ENCODE measurements at regions of chr6 and their contacts with region 1.

Region 1: DNA sequence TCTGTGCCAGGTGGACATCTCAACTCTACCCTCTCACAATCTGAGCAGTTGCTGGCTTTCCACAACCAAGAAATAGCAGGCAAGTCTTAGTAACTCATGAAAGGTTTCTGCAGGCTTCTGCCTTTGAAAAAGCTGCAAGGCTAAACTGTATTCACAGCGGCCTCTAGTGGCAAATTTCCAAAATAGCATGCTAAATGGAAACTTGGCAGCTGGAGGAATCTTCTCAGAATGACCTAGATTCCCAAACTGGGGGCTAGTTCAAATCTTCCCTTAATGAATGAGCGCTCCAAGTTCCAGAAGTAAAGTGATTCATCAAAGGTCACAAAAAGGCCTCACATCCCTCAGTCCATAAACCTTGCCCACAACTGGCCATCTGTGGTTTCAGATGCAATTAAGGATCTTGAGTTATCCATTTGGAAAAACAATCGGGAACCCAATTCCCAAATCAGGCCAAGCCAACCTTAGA is 11.9 kb upstream of the CPNE5 start:
- DNase-seq: peak; percentile 56
- ATAC-seq: peak; percentile 23
- H3K4me3 Mint-ChIP-seq: no peak overlapping the region
- H3K27ac Mint-ChIP-seq: no peak overlapping the region
- H3K4me1 Mint-ChIP-seq: peaks cover 2% of the 10 kb centered on the region
- H3K27me3 Mint-ChIP-seq: no peaks in the 10 kb centered on the region

Region 2: DNA sequence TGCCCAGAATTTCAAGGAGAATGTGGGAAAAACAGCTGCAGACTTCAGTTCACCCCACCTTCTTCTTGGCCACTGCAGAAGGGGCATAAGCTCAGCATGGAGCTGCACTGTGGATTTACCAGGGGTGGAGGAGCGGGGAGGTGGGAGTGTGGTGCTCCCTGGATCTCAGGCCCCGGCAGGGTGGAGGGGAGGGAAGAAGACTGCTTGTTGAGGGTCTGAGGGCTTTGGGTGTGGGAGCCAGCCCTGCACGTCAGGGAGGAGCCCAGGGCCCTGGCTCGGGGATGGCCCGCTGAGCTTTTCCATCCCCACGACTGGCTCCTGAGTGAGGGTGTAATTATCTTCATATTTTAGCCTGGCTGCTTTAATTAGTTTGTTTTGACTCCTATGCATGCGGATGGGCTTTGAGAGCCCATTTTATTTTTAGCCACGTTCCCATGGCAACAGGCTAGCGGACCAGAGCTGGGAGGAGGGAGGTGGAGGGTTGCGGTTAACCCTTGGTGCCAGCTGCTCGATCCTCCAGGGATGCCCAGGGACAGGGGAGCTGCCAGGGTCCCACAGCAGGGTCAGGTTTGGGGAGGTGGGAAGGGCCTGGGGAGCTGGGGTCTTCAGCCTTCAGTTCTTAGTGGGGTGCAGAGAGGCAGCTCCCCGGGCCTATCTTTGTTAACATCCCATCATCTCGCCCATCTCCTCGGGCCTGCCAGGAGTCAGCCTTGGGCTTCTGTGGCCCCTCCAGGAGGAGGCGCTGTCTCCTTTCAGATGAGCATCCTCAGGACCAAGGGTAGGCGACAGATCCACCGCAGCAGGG is 85.4 kb before region 1 on chr6:
- CTCF ChIA-PET with region 1: interaction called, 60 read pairs
- POLR2A ChIA-PET with region 1: interaction called, 3 read pairs
- intact Hi-C with region 1: loop called (anchors 1 to 2 kb)
- DNase-seq: peak; percentile 92
- ATAC-seq: peak; percentile 92
- H3K4me3 Mint-ChIP-seq: no peak overlapping the region
- H3K27ac Mint-ChIP-seq: no peak overlapping the region
- H3K4me1 Mint-ChIP-seq: peaks cover 26% of the 10 kb centered on the region
- H3K27me3 Mint-ChIP-seq: no peaks in the 10 kb centered on the region

Region 3: GRCh38 chr6:36780442-36781177 is 70.6 kb before region 1 on chr6:
- CTCF ChIA-PET with region 1: interaction called, 17 read pairs
- POLR2A ChIA-PET with region 1: no interaction called
- intact Hi-C with region 1: no loop called
- DNase-seq: no peak
- ATAC-seq: no peak
- H3K4me3 Mint-ChIP-seq: no peak overlapping the region
- H3K27ac Mint-ChIP-seq: no peak overlapping the region
- H3K4me1 Mint-ChIP-seq: no peaks in the 10 kb centered on the region
- H3K27me3 Mint-ChIP-seq: no peaks in the 10 kb centered on the region

Region 4: GRCh38 chr6:36786055-36786675 is 65.0 kb before region 1 on chr6:
- CTCF ChIA-PET with region 1: interaction called, 17 read pairs
- POLR2A ChIA-PET with region 1: no interaction called
- intact Hi-C with region 1: no loop called
- DNase-seq: no peak
- ATAC-seq: no peak
- H3K4me3 Mint-ChIP-seq: no peak overlapping the region
- H3K27ac Mint-ChIP-seq: no peak overlapping the region
- H3K4me1 Mint-ChIP-seq: peaks cover 6% of the 10 kb centered on the region
- H3K27me3 Mint-ChIP-seq: peaks cover 2% of the 10 kb centered on the region

Region 5: DNA sequence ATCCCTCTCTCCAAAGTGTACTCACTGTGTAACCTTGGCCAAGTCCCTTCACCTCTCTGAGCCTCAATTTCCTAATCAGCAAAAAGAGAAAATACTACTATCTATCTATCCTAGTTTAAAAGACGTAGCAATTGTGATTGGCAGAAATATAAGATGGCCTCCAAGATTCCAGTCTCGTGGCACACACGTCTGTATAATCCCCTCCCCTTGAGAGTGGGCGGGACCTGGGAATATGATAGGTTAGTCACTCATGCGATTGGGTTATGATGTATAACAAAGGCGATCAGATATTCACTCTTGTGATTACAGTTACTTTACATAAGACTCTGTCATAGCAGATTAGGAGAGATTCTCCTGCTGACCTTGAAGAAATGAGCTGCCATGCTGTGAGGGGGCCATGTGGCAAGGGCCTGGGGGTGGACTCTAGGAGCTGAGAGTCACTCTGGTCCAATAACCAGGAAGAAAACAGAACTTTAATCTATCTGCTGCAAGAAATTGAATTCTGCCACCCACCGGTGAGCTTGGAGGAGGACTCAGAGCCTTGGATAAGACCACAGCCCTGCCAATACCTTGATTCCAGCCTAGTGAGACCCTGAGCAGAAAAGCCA is 17.9 kb before region 1 on chr6:
- CTCF ChIA-PET with region 1: interaction called, 11 read pairs
- POLR2A ChIA-PET with region 1: interaction called, 3 read pairs
- intact Hi-C with region 1: no loop called
- DNase-seq: no peak
- ATAC-seq: no peak
- H3K4me3 Mint-ChIP-seq: no peak overlapping the region
- H3K27ac Mint-ChIP-seq: no peak overlapping the region
- H3K4me1 Mint-ChIP-seq: no peaks in the 10 kb centered on the region
- H3K27me3 Mint-ChIP-seq: peaks cover 10% of the 10 kb centered on the region

Region 6: GRCh38 chr6:36839749-36840431 is 11.3 kb before region 1 on chr6:
- CTCF ChIA-PET with region 1: interaction called, 13 read pairs
- POLR2A ChIA-PET with region 1: no interaction called
- intact Hi-C with region 1: no loop called
- DNase-seq: peak; percentile 65
- ATAC-seq: peak; percentile 72
- H3K4me3 Mint-ChIP-seq: peak overlapping the region; percentile 62
- H3K27ac Mint-ChIP-seq: peak overlapping the region; percentile 48
- H3K4me1 Mint-ChIP-seq: peaks cover 10% of the 10 kb centered on the region
- H3K27me3 Mint-ChIP-seq: peaks cover 24% of the 10 kb centered on the region

Region 7: GRCh38 chr6:36874443-36875249 is 23.5 kb after region 1 on chr6 and contains the start of gene PPIL1:
- CTCF ChIA-PET with region 1: interaction called, 35 read pairs
- POLR2A ChIA-PET with region 1: interaction called, 3 read pairs
- intact Hi-C with region 1: no loop called
- DNase-seq: peak; percentile 90
- ATAC-seq: peak; percentile 80
- H3K4me3 Mint-ChIP-seq: peak within 1 kb of the TSS; percentile 98
- H3K27ac Mint-ChIP-seq: peak within 1 kb of the TSS; percentile 99
- H3K4me1 Mint-ChIP-seq: peaks cover 45% of the 10 kb centered on the region
- H3K27me3 Mint-ChIP-seq: peaks cover 7% of the 10 kb centered on the region
- total RNA-seq, gene PPIL1: 45.9 to 46.0 TPM

Measured in activated CD4-positive, alpha-beta T cell treated with anti-CD3 and anti-CD28 coated beads for 36 hours (primary cell).